Left ventricle myocardium inferior (tissue), 1 donor: ENCODE measurements at regions of chr1 and their contacts with region 1.

Region 1: GRCh38 chr1:39816415-39817090 is 27.9 kb upstream of the BMP8B start:
- DNase-seq: peak; percentile 69
- H3K4me3 ChIP-seq: no peak overlapping the region
- H3K27ac ChIP-seq: no peak overlapping the region
- H3K4me1 ChIP-seq: no peaks in the 10 kb centered on the region
- H3K27me3 ChIP-seq: peaks cover 59% of the 10 kb centered on the region
- CTCF ChIP-seq: peak; percentile 85

Region 2: DNA sequence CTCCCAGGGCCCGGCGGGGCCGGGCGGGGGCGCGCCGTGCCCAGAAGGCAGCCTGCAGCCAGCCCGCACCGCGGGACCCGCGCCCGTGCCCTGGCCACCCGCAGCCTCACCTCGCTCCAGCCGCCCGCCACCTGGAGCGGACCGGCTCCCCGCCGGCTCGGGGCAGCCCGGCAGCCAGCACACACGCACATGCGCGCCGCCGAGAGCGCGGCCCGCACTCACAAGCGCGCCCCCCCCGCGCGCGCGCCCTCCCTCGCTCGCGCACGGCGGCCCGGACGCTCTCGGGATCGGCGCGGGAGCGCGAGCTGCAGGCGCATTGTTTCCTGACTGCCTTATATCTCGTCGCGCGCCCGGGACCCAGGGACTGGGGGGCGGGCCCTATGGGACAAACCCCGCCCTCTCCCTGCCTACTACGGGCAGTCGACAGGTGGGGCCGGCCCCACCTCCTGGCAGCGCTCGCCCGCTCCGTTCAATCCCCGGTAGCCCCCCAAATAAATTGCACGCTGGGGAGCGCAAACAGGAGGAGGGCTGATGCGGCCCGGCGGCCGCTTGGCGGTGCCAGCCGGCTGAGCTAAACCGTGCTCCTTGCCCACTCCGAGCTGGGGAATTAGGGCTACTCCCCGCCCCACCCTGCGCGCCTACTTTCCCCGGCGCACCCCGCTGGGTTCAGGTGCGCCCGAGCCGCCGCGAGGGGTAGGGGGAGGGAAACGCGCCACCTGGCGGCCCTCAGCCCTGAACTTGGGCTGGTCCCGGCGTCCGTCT is 85.3 kb after region 1 on chr1 and contains the start of gene MYCL:
- intact Hi-C with region 1: no loop called
- DNase-seq: peak; percentile 65
- H3K4me3 ChIP-seq: peak within 1 kb of the TSS; percentile 76
- H3K27ac ChIP-seq: peak within 1 kb of the TSS; percentile 30
- H3K4me1 ChIP-seq: peaks cover 20% of the 10 kb centered on the region
- H3K27me3 ChIP-seq: peaks cover 81% of the 10 kb centered on the region
- CTCF ChIP-seq: peak; percentile 73
- total RNA-seq, gene MYCL: 0.44 TPM

Region 3: DNA sequence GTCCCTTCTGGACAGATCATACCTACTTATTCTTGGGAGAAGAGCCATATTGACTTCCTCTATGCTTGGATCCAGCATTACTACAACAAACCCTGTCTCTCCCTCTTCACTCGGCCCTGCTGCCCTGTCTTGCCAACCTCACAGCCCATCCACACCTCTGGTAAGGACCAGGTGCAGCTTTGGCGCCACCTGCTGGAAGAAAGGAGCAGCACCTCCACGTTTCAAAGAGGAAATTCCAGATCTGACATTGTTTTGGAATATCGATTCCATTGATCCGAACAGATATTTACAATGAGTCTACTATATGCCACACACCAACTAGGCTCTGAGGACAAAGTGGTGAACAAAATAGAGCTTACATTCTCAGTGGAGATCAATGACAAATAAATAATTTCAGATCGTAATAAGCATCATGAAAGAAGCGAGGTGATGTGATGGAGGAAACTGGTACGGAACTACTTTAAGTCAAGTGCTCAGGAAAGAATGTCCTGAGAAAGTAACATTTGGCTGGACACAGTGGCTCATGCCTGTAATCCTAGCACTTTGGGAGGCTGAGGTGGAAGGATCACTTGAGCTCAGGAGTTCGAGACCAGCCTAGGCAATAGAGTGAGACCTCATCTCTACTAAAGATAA is 157.1 kb after region 1 on chr1:
- intact Hi-C with region 1: loop called (anchors 5 kb)
- DNase-seq: peak; percentile 64
- H3K4me3 ChIP-seq: no peak overlapping the region
- H3K27ac ChIP-seq: no peak overlapping the region
- H3K4me1 ChIP-seq: no peaks in the 10 kb centered on the region
- H3K27me3 ChIP-seq: peaks cover 5% of the 10 kb centered on the region
- CTCF ChIP-seq: peak; percentile 96